ENCODE measurements at regions of chr22 and their contacts with region 1.

Region 1: GRCh38 chr22:50148991-50149721 is 21.4 kb upstream of the PANX2 start:
- DNase-seq: peak; percentile 67 to 81
- ATAC-seq: peak; percentile 77 to 91
- H3K4me3 ChIP-seq: no peak overlapping the region
- H3K27ac ChIP-seq: peak overlapping the region in 1 of 2 experiments; percentile 66; a peak in 2 of 6 replicates
- H3K4me1 ChIP-seq: no peaks in the 10 kb centered on the region
- CTCF ChIP-seq: peak; percentile 74
- EP300 ChIP-seq: no peak
- POLR2A ChIP-seq: no peak
- RAD21 ChIP-seq: peak; percentile 77 to 80

Region 2: DNA sequence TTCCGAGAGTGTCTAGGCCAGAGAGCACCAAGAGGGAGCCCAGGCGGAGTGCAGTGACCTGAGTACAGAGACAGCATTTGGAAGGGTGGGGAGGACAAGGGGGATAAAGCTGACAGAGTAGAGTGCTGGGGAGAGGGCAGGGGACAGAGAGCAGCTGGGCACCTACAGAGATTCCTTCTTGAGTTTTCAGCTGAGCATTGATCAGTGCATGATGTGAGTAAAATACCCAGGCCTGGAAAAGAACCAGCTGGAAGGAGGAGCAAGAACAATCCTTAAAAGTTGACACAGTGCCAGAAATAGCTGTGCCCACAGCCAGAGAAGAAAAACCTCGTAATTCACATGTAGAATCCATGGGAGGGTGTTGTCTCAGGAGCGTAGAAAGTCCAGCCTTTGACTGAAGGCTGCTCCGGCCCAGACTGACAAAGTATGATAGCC is 12.6 kb before region 1 on chr22:
- CTCF ChIA-PET with region 1: interaction called, 14 read pairs
- POLR2A ChIA-PET with region 1: no interaction called
- DNase-seq: no peak
- ATAC-seq: no peak
- H3K4me3 ChIP-seq: no peak overlapping the region
- H3K27ac ChIP-seq: no peak overlapping the region
- H3K4me1 ChIP-seq: peaks cover 10% of the 10 kb centered on the region; the same call in 1 of the 3 replicates
- CTCF ChIP-seq: no peak
- EP300 ChIP-seq: no peak
- POLR2A ChIP-seq: no peak
- RAD21 ChIP-seq: no peak

Region 3: GRCh38 chr22:50190182-50190940 is 41.2 kb after region 1 on chr22:
- CTCF ChIA-PET with region 1: interaction called, 15 read pairs
- POLR2A ChIA-PET with region 1: no interaction called
- DNase-seq: peak; percentile 68 to 74
- ATAC-seq: peak; percentile 76 to 83
- H3K4me3 ChIP-seq: peak overlapping the region; percentile 56
- H3K27ac ChIP-seq: peak overlapping the region; percentile 79 to 93
- H3K4me1 ChIP-seq: peaks cover 25% of the 10 kb centered on the region
- CTCF ChIP-seq: peak; percentile 36; the same call in 2 of the 3 replicates
- EP300 ChIP-seq: no peak
- POLR2A ChIP-seq: peak; percentile 31; the same call in 1 of the 2 replicates
- RAD21 ChIP-seq: no peak

Region 4: DNA sequence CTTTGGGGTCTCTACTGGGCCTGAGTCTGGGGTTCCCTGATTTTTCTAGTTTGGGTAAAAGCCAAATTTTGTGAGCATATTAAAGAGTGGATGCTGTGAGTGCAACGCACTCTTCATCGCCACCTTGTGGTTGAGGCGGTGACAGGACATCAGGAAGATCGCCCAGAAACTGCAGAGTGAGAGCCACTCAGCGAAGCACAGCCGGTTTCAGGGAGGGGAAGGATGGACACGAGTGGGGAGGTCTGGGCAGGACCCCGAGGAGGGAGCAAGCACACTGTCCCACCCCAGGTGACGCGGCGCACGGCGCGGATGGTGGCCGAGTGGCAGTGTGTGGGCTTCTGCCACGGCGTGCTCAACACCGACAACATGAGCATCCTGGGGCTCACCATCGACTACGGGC is 60.7 kb after region 1 on chr22:
- CTCF ChIA-PET with region 1: interaction called, 32 read pairs
- POLR2A ChIA-PET with region 1: interaction called, 5 read pairs
- DNase-seq: peak; percentile 52 to 58
- ATAC-seq: peak; percentile 77 to 78
- H3K4me3 ChIP-seq: no peak overlapping the region
- H3K27ac ChIP-seq: no peak overlapping the region
- H3K4me1 ChIP-seq: no peaks in the 10 kb centered on the region
- CTCF ChIP-seq: peak; percentile 66
- EP300 ChIP-seq: no peak
- POLR2A ChIP-seq: no peak
- RAD21 ChIP-seq: peak; percentile 54 to 56

Region 5: DNA sequence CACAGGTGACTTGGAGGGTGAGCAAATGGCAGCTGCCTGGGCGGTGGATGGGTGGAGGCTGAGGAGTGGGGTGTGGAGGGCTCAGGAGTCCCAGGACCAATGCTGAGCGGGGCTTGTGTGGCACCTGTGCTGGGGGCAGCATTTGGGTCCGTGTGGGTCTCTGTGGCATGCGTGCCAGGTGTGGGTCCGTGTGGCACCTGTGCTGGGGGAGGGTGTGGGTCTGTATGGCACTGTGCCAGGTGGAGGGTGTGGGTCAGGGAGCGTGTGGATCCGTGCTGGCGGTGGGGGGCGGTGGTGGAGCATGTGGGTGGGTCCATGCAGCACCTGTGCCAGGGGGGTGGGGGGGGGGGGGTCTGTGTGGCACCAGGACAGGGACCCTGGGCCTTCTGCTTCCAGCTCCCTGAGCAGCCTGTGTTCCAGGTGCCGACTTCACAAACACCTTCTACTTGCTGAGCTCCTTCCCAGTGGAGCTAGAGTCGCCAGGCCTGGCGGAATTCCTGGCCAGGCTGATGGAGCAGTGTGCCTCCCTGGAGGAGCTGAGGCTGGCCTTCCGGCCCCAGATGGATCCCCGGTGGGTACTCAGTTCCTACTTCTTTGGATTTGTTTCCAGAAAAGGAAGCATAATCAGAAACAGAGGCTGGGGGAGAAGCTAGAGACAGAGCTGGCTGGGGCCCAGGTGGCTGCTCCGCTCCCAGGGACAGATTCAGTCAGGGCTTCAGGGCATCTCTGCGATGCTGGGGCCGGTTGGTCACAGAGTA is 66.3 kb after region 1 on chr22:
- CTCF ChIA-PET with region 1: interaction called, 18 read pairs
- POLR2A ChIA-PET with region 1: no interaction called
- DNase-seq: no peak
- ATAC-seq: no peak
- H3K4me3 ChIP-seq: no peak overlapping the region
- H3K27ac ChIP-seq: no peak overlapping the region
- H3K4me1 ChIP-seq: no peaks in the 10 kb centered on the region
- CTCF ChIP-seq: no peak
- EP300 ChIP-seq: no peak
- POLR2A ChIP-seq: no peak
- RAD21 ChIP-seq: no peak

Region 6: GRCh38 chr22:50236731-50237409 is 87.7 kb after region 1 on chr22:
- CTCF ChIA-PET with region 1: interaction called, 29 read pairs
- POLR2A ChIA-PET with region 1: no interaction called
- DNase-seq: peak; percentile 25 to 36
- ATAC-seq: peak; percentile 69 to 70; a peak in 4 of 6 replicates
- H3K4me3 ChIP-seq: no peak overlapping the region
- H3K27ac ChIP-seq: no peak overlapping the region
- H3K4me1 ChIP-seq: peaks cover 7% of the 10 kb centered on the region; the same call in 2 of the 3 replicates
- CTCF ChIP-seq: peak; percentile 36; the same call in 2 of the 3 replicates
- EP300 ChIP-seq: no peak
- POLR2A ChIP-seq: no peak
- RAD21 ChIP-seq: peak; percentile 24 to 27; a peak in 1 of 5 replicates

Region 7: DNA sequence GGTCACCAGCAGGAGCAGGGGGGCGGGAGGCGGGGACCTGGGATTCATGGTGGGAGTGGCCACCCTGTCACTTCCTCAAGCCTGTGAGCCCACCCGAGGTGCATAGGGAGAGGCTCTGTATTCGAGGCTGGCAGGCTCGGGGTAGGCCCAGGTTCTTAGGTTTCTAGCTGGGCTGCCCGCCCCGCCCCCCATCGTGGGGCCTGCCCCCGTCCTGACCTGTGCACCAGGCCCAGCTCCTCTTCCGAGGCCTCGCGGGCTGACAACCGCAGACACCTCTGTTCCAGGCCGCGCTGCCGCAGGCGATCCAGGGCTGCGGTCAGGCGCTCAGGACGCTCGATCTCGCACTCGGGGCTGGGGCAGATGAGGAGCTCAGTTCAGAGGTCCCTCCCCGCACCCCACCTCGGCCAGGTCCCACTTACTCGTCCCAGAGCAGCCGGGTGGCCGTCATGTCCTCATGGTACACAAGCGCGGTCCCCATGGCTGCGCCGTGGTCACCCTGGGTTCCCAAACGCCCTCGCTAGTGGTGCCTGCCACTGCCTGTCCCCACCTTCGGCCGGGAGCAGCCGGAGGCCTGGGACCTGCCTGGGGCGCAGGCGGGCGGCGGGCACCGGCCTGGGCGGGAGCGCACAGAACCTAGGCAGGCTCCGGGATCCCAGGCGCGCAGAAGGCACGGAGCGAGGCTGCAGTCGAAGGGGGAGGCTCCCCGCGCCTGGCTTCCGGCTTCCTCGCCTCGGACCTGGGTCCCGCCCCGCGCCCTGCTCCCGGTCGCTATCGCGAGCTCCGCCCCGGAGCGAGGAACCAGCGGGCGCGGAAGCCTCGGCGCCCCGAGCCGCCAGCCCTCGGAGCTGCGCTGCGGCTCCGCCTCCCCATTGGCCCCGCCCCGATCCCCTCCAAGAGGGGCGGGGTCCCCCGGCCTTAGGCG is 101.7 kb after region 1 on chr22 and contains the start of gene HDAC10:
- CTCF ChIA-PET with region 1: interaction called, 11 read pairs
- POLR2A ChIA-PET with region 1: no interaction called
- DNase-seq: peak in 1 of 2 experiments; percentile 43
- ATAC-seq: peak; percentile 46 to 71
- H3K4me3 ChIP-seq: peak within 1 kb of the TSS; percentile 53
- H3K27ac ChIP-seq: peak within 1 kb of the TSS; percentile 76 to 93
- H3K4me1 ChIP-seq: peaks cover 17% of the 10 kb centered on the region; the same call in 2 of the 3 replicates
- CTCF ChIP-seq: no peak
- EP300 ChIP-seq: no peak
- POLR2A ChIP-seq: no peak; the same call in 1 of the 2 replicates
- RAD21 ChIP-seq: no peak
- polyA plus RNA-seq, gene HDAC10: 2.4 and 2.5 TPM in 2 replicates

Measured in A549 (cell line).